A673 (cell line): ENCODE measurements at regions of chr9 and their contacts with region 1.

Region 1: DNA sequence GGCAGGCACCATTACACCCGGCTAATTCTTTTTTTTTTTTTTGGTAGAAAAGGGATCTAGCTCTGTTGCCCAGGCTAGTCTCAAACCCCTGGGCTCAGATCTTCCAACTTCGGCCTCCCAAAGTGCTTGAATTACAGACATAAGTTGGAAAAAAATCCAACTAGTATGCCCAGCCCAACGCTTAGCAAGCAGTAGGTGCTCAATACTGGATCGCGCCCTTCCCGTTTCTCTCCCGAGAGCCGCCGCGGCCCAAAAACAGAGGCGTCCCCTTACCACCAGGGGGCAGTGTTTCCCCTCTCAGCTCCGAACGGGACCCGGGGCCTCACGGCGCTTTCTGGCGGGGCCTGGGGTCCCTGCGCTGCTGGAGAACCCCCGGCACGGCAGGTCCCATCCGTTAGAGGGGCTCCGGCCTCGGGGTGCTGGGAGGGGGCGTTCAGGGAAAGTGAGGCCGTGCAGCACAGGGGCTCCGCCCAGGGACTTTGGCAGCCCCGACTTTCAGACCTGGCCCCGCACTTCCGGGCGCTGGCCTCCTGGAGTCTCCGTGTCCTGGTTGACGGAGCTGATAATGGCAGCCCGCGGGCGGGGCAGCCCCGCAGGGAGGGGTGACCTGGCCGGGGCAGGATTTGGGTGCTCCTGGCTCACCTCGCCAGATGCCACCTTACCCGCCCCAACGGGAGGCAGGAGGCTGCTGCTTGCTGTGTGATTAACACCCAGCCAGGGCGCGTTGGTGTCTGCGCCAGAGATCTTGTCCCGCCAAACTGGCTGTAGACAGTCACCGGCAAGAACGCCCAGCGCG is 15.2 kb downstream of the PTGES start:
- DNase-seq: peak; percentile 90
- H3K4me3 ChIP-seq: peak overlapping the region; percentile 56
- H3K27ac ChIP-seq: peak overlapping the region; percentile 61
- H3K4me1 ChIP-seq: no peaks in the 10 kb centered on the region
- H3K27me3 ChIP-seq: no peaks in the 10 kb centered on the region
- CTCF ChIP-seq: peak; percentile 96

Region 2: DNA sequence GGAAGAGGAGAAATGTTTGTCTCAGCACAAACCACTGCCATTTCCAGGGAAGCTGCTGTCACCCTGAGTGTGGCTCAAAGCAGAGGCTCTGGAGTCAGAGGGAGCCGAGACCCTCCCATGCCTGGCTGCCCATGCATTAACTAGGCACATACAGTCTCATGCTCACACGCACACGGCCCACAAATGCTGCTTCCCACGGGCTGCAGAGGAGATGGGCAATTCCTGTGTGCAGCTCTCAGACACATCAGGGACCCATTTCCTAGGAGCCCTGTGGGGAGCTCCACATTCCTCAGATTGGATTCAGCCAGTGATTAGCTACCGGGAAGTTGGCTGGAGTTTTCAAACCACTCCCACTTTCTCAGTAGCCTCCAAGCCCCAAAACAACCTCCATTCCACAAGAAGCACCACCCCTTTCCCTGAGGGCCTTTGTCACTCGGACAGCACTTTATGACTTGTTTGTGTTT is 24.3 kb after region 1 on chr9:
- CTCF ChIA-PET with region 1: interaction called, 12 read pairs
- POLR2A ChIA-PET with region 1: no interaction called
- intact Hi-C with region 1: no loop called
- DNase-seq: peak; percentile 33
- H3K4me3 ChIP-seq: no peak overlapping the region
- H3K27ac ChIP-seq: no peak overlapping the region
- H3K4me1 ChIP-seq: no peaks in the 10 kb centered on the region
- H3K27me3 ChIP-seq: no peaks in the 10 kb centered on the region
- CTCF ChIP-seq: no peak

Region 3: GRCh38 chr9:129783516-129784361 is 46.1 kb after region 1 on chr9:
- CTCF ChIA-PET with region 1: interaction called, 9 read pairs
- POLR2A ChIA-PET with region 1: no interaction called
- intact Hi-C with region 1: loop called (anchors 1 kb)
- DNase-seq: peak; percentile 87
- H3K4me3 ChIP-seq: no peak overlapping the region
- H3K27ac ChIP-seq: no peak overlapping the region
- H3K4me1 ChIP-seq: no peaks in the 10 kb centered on the region
- H3K27me3 ChIP-seq: peaks cover 8% of the 10 kb centered on the region
- CTCF ChIP-seq: peak; percentile 93

Region 4: DNA sequence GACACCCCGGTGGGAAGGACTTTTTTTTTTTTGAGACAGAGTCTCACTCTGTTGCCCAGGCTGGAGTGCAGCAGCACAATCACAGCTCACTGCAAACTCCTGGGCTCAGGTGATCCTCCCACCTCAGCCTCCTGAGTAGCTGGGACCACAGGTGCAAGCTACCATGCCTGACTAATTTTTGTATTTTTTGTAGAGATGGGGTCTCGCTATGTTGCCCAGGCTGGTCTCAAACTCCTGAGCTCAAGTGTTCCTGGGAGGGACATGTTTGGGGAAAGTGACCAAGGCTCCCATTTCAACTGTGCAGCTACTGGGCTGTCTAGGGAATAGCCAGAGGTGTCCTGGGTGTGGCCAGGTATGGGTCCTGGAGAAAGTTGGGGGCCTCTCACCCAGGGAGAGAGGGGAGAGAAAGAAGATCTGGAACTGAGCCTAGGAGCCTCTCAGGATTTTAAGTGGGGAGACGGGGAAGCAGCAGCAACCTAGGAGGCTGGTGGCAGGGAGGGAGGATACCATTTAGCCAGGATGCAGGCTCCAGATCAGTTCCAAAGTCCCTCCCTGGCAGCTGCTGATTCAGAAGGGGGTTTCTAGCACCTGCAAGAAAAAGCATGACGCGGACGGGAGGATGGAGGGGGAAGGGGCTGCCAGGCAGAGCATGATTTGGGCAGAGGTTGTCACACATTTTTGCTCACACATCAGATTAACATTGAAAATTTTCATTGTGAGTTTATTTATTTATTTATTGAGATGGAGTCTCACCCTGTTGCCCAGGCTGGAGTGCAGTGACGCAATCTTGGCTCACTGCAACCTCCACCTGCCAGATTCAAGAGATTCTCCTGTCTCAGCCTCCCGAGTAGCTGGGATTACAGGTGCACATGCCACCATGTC is 58.6 kb after region 1 on chr9:
- CTCF ChIA-PET with region 1: no interaction called
- POLR2A ChIA-PET with region 1: no interaction called
- intact Hi-C with region 1: loop called (anchors 2 kb)
- DNase-seq: no peak
- H3K4me3 ChIP-seq: no peak overlapping the region
- H3K27ac ChIP-seq: no peak overlapping the region
- H3K4me1 ChIP-seq: no peaks in the 10 kb centered on the region
- H3K27me3 ChIP-seq: peaks cover 13% of the 10 kb centered on the region
- CTCF ChIP-seq: no peak